ENCODE measurements at regions of chrX and their contacts with region 1.

Region 1: DNA sequence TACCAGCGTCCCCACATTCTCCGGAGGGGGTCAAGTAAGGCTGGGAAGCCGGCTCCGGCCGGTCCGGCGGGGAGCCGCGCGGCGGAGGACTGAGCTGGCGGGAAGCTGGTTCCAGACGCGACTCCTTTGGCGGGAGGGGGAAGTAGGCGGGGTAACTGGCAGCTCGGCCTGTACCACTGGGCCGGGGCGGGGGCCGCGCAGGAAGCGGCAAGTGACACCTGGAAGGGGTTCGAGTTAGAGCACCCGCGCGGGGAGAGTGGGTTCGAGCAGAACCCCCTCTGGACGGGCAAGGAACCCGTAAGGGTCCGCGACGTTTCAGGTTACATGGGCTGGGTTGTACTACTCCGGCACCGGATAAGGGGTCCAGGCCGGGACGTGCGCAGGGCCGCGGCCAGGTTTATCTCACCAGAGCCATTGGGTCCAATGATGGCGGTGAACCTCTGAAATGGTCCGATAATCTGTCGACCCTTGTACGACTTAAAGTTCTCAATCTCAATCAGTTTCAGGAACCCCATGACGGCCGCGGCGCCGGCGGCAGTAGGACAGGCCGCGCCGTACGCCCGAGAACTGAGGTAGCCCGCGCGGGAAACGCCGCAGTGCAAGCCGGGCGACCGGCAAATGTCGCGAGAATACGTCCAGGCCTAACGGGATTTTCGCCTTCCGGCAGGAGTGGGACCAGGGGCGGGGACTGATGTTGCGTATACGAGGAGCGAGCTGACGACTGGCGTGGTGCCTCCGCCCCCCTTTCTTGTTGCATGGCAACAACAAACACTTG is at the start of gene SMC1A:
- DNase-seq: peak; percentile 99
- ATAC-seq: peak; percentile 98
- total RNA-seq, gene SMC1A: 67.7 TPM

Region 2: DNA sequence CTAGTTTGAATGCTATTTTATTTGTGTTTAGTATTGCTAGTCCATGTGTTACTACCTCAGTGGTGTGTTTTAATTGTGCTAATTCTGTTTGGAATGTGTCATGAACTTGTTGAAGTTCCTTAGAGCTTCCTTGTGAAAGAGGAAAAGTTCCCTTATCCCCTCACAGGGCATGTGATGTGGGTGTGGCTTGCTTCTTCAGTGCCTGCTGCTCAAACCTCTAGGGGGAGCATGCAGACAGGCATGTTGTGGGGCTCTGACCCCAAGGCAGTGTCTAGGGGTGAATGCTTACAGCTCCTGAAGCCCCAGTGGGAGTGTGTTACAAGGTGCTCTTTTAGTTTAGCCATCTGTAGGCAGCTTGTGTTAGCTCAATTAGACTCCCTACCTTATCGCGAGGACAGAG is 1151.1 kb before region 1 on chrX:
- intact Hi-C with region 1: no loop called
- DNase-seq: no peak
- ATAC-seq: no peak

Region 3: GRCh38 chrX:53317365-53318069 is 104.8 kb before region 1 on chrX:
- intact Hi-C with region 1: loop called (anchors 10 kb)
- DNase-seq: peak; percentile 81
- ATAC-seq: peak; percentile 84

Region 4: DNA sequence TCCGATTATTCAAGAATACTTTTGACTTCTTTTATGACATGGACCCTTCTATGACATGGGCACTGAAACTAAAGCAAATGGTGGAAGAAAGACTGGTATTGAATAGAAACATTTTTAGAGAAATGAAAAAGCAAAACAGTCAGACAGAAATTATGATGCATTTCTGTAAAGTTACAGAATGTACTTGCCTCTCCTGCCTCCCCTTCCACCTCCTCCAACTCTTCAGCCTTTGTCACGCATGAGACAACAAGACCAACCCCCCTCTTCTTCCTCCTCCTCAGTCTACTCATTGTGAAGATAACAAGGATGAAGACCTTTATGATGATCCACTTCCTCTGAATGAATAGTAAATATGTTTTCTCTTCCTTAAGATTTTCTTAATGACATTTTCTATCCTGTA is 310.5 kb after region 1 on chrX:
- intact Hi-C with region 1: no loop called
- DNase-seq: no peak
- ATAC-seq: no peak